ENCODE measurements at regions of chr11 and their contacts with region 1.

Region 1: DNA sequence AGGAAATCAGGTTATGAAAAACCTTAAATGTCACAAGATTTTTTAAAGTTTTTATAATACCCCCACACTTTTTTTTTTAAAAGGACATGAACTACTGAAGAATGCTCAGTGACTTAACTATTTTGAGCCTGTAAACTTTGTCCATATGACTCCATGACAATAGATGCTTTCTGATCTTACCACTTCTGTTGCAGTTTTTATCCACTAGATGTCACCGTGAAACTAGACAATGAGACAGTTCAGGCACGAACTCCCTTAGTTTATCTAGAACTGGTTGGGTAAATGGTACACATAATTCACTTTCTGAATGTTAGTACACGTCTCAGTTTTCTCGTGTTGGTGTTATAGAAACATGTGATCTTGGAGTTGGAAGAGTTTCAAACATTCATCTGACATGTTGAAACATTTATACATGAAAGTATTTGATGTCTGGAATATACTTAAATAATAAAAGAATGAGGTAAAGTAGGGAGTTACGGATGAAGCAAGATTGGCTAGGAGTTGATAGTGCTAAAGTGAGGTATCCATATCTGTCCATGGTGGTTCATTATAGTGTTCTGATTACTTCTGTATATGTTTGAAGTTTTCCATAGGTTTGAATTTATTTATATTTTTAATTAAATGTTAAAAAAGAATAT is 8.1 kb downstream of the CCDC15 start:
- DNase-seq: peak; percentile 71
- ATAC-seq: peak; percentile 99
- H3K4me3 ChIP-seq: no peak overlapping the region
- H3K27ac ChIP-seq: no peak overlapping the region
- H3K4me1 ChIP-seq: no peaks in the 10 kb centered on the region
- H3K27me3 ChIP-seq: no peaks in the 10 kb centered on the region
- CTCF ChIP-seq: peak; percentile 59 to 93 (median 81)
- POLR2A ChIP-seq: no peak
- RAD21 ChIP-seq: peak; percentile 96

Region 2: GRCh38 chr11:125141686-125142535 is 179.8 kb after region 1 on chr11:
- CTCF ChIA-PET with region 1: interaction called, 5 read pairs
- POLR2A ChIA-PET with region 1: no interaction called
- RAD21 ChIA-PET with region 1: no interaction called
- intact Hi-C with region 1: loop called (anchors 1 kb)
- DNase-seq: no peak
- ATAC-seq: peak; percentile 97
- H3K4me3 ChIP-seq: no peak overlapping the region
- H3K27ac ChIP-seq: no peak overlapping the region
- H3K4me1 ChIP-seq: peaks cover 0 to 2% of the 10 kb centered on the region in 2 experiments; a peak in 1 of 4 replicates
- H3K27me3 ChIP-seq: no peaks in the 10 kb centered on the region
- CTCF ChIP-seq: peak; percentile 79 to 98 (median 93)
- POLR2A ChIP-seq: no peak
- RAD21 ChIP-seq: peak; percentile 90

Region 3: DNA sequence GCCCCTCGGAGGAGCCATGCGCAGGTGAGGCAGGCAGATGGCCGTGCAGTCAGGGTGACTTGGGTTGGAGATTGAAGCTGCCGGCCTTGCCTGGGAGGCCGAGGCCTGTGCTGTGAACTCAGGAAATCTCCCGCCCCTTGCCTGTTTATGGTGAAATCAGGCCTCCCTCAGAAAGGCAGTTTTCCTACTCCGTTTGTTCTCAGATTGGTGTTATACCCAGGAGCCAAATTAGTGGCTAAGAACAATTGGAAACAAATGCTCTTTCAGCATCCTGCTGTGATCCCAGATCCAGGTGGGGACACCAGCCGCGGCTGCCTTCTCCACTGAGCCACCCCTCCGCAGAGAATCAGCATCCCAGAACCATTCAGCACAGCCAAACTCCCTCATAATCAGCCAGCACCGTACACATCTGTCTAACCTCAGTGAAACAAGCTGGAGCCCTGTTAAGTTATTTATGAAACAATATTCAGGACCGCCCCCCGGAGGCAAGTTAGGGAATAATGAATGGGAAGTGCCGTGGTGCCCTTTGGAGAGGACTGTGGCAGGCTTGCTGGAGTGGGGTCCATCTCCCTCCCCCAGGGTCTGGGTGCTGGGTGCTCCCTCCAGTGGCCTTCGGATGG is 262.4 kb after region 1 on chr11:
- CTCF ChIA-PET with region 1: no interaction called
- POLR2A ChIA-PET with region 1: no interaction called
- RAD21 ChIA-PET with region 1: no interaction called
- intact Hi-C with region 1: loop called (anchors 10 kb)
- DNase-seq: peak; percentile 8
- ATAC-seq: peak; percentile 87
- H3K4me3 ChIP-seq: no peak overlapping the region
- H3K27ac ChIP-seq: no peak overlapping the region
- H3K4me1 ChIP-seq: peaks cover 0 to 4% of the 10 kb centered on the region in 2 experiments; a peak in 2 of 4 replicates
- H3K27me3 ChIP-seq: 0 out of 2 replicates have a peak, but pooled peaks cover 6% of the 10 kb centered on the region
- CTCF ChIP-seq: peak; percentile 40 to 48 (median 43); a peak in 5 of 6 replicates
- POLR2A ChIP-seq: no peak
- RAD21 ChIP-seq: peak; percentile 55

Region 4: DNA sequence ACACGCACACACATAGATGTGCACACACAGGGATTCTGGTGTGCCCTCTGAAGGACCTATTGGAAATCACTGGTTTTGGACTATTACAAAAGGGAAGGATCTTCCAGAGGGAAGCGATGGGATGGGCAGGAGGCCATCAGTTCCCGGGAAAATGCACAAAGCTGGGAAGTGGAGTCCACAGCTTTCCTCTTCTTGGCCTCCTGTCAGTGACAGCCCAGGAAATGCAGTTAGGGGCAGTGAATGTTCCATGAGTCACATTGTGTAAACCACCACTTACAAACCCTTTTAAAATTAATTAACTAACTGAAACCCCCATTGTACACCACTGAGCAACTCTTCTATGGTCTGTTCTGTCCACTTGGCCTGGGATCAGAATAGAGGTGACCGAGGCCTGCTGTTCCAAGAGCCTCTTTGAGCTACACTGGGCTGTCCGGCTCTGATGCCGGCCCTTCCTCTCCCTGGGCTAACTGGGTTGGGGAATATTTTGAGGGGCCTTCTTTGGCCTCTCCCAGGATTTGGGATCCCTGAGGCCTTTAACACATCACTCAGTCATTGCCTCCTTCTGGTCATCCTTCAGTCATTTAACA is 396.3 kb after region 1 on chr11:
- CTCF ChIA-PET with region 1: no interaction called
- POLR2A ChIA-PET with region 1: no interaction called
- RAD21 ChIA-PET with region 1: no interaction called
- intact Hi-C with region 1: loop called (anchors 2 kb)
- DNase-seq: no peak
- ATAC-seq: no peak
- H3K4me3 ChIP-seq: no peak overlapping the region
- H3K27ac ChIP-seq: no peak overlapping the region
- H3K4me1 ChIP-seq: no peaks in the 10 kb centered on the region
- H3K27me3 ChIP-seq: no peaks in the 10 kb centered on the region
- CTCF ChIP-seq: no peak
- POLR2A ChIP-seq: no peak
- RAD21 ChIP-seq: no peak

Region 5: GRCh38 chr11:125404776-125405435 is 442.8 kb after region 1 on chr11:
- CTCF ChIA-PET with region 1: no interaction called
- POLR2A ChIA-PET with region 1: no interaction called
- RAD21 ChIA-PET with region 1: no interaction called
- intact Hi-C with region 1: loop called (anchors 1 kb)
- DNase-seq: peak; percentile 21
- ATAC-seq: peak; percentile 98
- H3K4me3 ChIP-seq: no peak overlapping the region; a peak in 1 of 4 replicates
- H3K27ac ChIP-seq: no peak overlapping the region
- H3K4me1 ChIP-seq: peaks cover 0 to 9% of the 10 kb centered on the region in 2 experiments; a peak in 2 of 4 replicates
- H3K27me3 ChIP-seq: peaks cover 39% of the 10 kb centered on the region
- CTCF ChIP-seq: peak; percentile 70 to 89 (median 88)
- POLR2A ChIP-seq: no peak
- RAD21 ChIP-seq: peak; percentile 83

Region 6: GRCh38 chr11:125429166-125429707 is 467.1 kb after region 1 on chr11:
- CTCF ChIA-PET with region 1: interaction called, 5 read pairs
- POLR2A ChIA-PET with region 1: no interaction called
- RAD21 ChIA-PET with region 1: no interaction called
- intact Hi-C with region 1: loop called (anchors 1 kb)
- DNase-seq: peak; percentile 63
- ATAC-seq: peak; percentile 78
- H3K4me3 ChIP-seq: peak overlapping the region; percentile 18 to 22; a peak in 3 of 4 replicates
- H3K27ac ChIP-seq: no peak overlapping the region
- H3K4me1 ChIP-seq: peaks cover 7 to 20% of the 10 kb centered on the region in 2 experiments; a peak in 3 of 4 replicates
- H3K27me3 ChIP-seq: no peaks in the 10 kb centered on the region
- CTCF ChIP-seq: peak; percentile 81 to 91 (median 86)
- POLR2A ChIP-seq: no peak
- RAD21 ChIP-seq: peak; percentile 85

Measured in HCT116 (cell line).